ENCODE measurements at regions of chr16 and their contacts with region 1.

Region 1: GRCh38 chr16:66406534-66407221 is 20.4 kb upstream of the BEAN1 start:
- H3K4me3 Mint-ChIP-seq: peak overlapping the region; percentile 72
- H3K27ac Mint-ChIP-seq: no peak overlapping the region
- H3K4me1 Mint-ChIP-seq: peaks cover 21% of the 10 kb centered on the region
- H3K27me3 Mint-ChIP-seq: peaks cover 21% of the 10 kb centered on the region

Region 2: GRCh38 chr16:65876056-65876408 is 530.6 kb before region 1 on chr16:
- intact Hi-C with region 1: no loop called
- H3K4me3 Mint-ChIP-seq: no peak overlapping the region
- H3K27ac Mint-ChIP-seq: no peak overlapping the region
- H3K4me1 Mint-ChIP-seq: no peaks in the 10 kb centered on the region
- H3K27me3 Mint-ChIP-seq: peaks cover 2% of the 10 kb centered on the region

Region 3: DNA sequence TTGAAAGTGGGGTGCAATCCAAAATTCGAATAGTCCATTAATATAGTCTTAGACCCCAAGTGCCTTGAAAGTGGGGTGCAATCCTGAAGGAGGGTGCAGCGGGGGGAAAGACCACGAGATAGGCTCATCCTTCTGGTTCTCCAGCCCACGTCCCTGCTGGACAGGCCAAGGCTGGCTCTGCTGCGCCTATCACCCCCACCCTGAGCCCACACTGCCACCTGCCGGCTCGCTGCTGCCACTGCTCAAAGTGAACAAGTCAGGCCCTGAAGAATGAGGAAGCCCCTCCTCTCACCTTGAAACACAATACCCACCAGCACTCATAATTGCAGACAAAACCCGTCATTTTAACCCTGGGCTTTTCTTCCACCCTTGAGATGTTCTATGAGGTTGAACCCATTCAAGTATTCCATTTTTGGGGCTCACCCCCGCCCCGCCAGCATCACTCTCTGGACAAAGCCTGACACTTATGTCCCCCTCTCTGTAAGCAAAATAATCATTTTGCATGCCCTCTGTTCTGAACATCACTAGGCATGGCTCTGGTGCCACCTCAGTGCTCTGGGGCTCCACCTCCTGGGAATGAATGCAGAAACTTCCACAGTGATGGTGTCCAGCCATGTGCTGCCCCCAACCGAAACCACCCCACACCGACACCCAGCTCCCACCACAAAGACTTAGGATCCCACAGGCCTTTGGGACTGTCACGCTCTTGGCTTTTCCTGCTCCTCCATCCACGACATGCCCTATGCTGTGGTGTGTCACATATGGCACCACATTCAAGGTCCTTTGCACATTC is 77.2 kb after region 1 on chr16:
- intact Hi-C with region 1: loop called (anchors 1 kb)
- H3K4me3 Mint-ChIP-seq: no peak overlapping the region
- H3K27ac Mint-ChIP-seq: no peak overlapping the region
- H3K4me1 Mint-ChIP-seq: peaks cover 81% of the 10 kb centered on the region
- H3K27me3 Mint-ChIP-seq: no peaks in the 10 kb centered on the region

Region 4: GRCh38 chr16:66516808-66517585 is 110.3 kb after region 1 on chr16:
- intact Hi-C with region 1: loop called (anchors 10 kb)
- H3K4me3 Mint-ChIP-seq: peak overlapping the region; percentile 80
- H3K27ac Mint-ChIP-seq: peak overlapping the region; percentile 100
- H3K4me1 Mint-ChIP-seq: peaks cover 100% of the 10 kb centered on the region
- H3K27me3 Mint-ChIP-seq: no peaks in the 10 kb centered on the region

Region 5: DNA sequence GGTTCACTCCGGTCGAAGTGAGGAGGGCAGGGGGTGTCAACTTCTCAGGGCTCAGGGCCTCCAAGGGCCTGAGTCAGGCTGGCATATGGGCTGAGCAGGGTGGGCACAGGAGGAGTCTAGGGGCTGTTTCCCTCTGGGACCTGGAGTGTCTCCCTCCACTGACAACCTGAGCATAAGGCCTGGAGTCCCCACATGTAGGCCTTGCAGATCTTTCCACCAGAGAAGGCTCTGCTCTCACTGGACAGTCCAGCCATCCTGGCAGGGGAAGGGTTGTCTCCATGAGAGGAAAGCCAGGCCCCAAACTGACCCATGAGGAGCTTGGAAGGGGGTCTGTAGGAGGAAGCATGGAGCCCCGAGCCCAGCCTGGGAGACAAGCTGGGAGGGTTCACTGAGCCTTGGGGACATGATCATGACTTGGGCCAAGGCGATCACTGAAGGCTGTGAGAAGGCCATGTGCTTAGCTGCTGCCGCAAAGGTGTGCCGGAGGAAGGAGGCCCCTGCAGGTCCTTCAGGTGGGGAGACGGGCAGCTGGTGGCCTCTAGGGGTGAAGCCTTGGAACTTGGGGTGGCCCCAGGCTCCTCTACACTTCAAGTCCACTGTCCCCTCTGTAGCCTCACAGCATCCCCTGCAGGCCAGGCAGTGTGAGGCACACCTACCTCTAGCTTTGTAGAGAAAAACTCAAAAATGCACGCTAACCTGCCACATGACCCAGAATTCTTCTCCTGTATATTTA is 182.5 kb after region 1 on chr16:
- intact Hi-C with region 1: loop called (anchors 1 kb)
- H3K4me3 Mint-ChIP-seq: no peak overlapping the region
- H3K27ac Mint-ChIP-seq: no peak overlapping the region
- H3K4me1 Mint-ChIP-seq: peaks cover 57% of the 10 kb centered on the region
- H3K27me3 Mint-ChIP-seq: peaks cover 7% of the 10 kb centered on the region

Region 6: DNA sequence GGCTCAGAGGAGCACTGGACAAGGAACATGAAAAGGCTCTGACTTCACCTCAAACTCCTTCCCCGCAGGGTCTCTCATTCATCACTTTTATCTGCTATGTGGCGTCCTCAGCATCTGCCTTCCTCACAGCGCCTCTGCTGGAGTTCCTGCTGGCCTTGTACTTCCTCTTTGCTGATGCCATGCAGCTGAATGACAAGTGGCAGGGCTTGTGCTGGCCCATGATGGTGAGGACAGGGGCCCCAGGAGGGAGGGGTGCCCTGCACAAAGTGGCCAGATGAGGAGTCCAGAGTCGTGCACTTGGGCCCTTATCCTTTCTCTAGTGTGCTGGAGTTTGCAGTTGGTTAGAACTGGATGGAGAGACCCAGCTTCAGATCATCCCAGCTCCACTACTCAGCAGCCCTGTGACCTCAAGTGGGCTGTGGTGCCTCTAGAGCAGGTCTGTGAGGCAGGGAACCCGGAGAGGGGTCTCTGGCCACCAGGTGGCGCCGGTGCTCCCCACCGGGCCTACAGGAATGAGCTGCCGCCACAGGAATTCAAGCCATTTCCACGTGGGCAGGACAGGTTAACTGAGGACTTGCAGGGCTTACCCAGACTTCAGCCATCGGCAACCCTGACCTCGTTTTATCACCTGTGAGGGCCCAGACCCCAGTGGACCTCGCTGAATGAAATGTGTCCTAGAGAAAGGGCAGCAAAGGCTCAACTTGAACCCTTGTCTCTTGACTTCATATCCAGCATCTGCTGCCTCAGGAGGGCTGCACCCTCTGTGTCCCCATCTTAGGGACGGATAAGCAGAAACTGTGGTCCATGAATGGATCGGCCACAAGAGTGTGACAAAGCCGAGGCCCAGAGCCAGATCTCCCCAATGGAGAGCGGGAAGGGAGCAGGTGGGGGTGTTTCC is 201.8 kb after region 1 on chr16:
- intact Hi-C with region 1: loop called (anchors 5 kb)
- H3K4me3 Mint-ChIP-seq: no peak overlapping the region
- H3K27ac Mint-ChIP-seq: peak overlapping the region; percentile 66
- H3K4me1 Mint-ChIP-seq: peaks cover 40% of the 10 kb centered on the region
- H3K27me3 Mint-ChIP-seq: peaks cover 8% of the 10 kb centered on the region

Region 7: GRCh38 chr16:66872943-66873684 is 466.4 kb after region 1 on chr16:
- intact Hi-C with region 1: loop called (anchors 5 kb)
- H3K4me3 Mint-ChIP-seq: peak overlapping the region; percentile 71
- H3K27ac Mint-ChIP-seq: peak overlapping the region; percentile 81
- H3K4me1 Mint-ChIP-seq: peaks cover 45% of the 10 kb centered on the region
- H3K27me3 Mint-ChIP-seq: peaks cover 37% of the 10 kb centered on the region

Measured in dendritic cell treated with granulocyte-macrophage colony-stimulating factor and Interleukin-4, amounts not matched to agents 40 ng/mL and 50 ng/mL, for 4 days (primary cell).